ENCODE measurements at regions of chr15 and their contacts with region 1.

Region 1: DNA sequence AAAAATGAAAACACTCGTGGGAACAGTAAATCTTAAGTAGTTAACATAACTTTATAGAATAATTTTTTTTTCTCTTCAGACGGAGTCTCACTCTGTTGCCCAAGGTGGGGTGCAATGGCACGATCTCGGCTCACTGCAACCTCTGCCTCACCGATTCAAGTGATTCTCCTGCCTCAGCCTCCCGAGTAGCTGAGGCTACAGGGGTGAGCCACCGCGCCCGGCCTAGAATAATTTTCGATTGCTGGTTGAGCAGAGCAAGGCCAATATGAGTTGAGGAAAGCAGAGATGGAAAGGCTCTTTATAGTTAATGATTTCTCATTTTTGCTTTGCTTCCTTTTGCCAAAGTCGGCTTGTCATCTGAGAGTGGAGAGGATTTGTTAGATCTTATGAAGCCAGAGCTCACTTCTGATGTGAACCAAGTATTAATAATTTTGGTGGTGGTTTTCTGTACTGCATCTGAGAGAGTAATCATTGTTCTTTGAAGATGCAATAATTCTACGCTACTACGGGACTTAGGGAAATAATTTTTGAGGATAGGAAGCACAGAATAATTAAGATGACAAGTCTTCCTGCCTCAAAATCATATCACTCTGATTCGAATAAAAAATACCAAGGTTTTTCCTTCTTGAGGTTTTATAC is 1.6 kb upstream of the GOLM2 start:
- DNase-seq: peak in 1 of 3 donors; percentile 2
- H3K4me3 ChIP-seq: peak overlapping the region; percentile 72 to 99 (median 94)
- H3K4me3 Mint-ChIP-seq: peak overlapping the region; percentile 89 to 98
- H3K27ac ChIP-seq: no peak overlapping the region
- H3K27ac Mint-ChIP-seq: peak overlapping the region in 2 of 7 donors; percentile 9 to 99
- H3K4me1 ChIP-seq: peaks cover 18 to 30% of the 10 kb centered on the region in 2 donors
- H3K4me1 Mint-ChIP-seq: peaks cover 34% of the 10 kb centered on the region
- H3K27me3 ChIP-seq: no peaks in the 10 kb centered on the region
- H3K27me3 Mint-ChIP-seq: peaks cover 2 to 12% (median 4%) of the 10 kb centered on the region in 3 donors
- CTCF ChIP-seq: peak; percentile 33

Region 2: GRCh38 chr15:44246521-44247268 is 40.2 kb before region 1 on chr15:
- intact Hi-C with region 1: no loop called
- DNase-seq: no peak
- H3K4me3 ChIP-seq: no peak overlapping the region
- H3K4me3 Mint-ChIP-seq: no peak overlapping the region
- H3K27ac ChIP-seq: no peak overlapping the region
- H3K27ac Mint-ChIP-seq: no peak overlapping the region
- H3K4me1 ChIP-seq: no peaks in the 10 kb centered on the region
- H3K4me1 Mint-ChIP-seq: no peaks in the 10 kb centered on the region
- H3K27me3 ChIP-seq: no peaks in the 10 kb centered on the region
- H3K27me3 Mint-ChIP-seq: peaks cover 3 to 9% (median 8%) of the 10 kb centered on the region in 3 donors
- CTCF ChIP-seq: no peak

Region 3: GRCh38 chr15:44265757-44266156 is 21.2 kb before region 1 on chr15:
- intact Hi-C with region 1: no loop called
- DNase-seq: no peak
- H3K4me3 ChIP-seq: no peak overlapping the region
- H3K4me3 Mint-ChIP-seq: no peak overlapping the region
- H3K27ac ChIP-seq: no peak overlapping the region
- H3K27ac Mint-ChIP-seq: no peak overlapping the region
- H3K4me1 ChIP-seq: no peaks in the 10 kb centered on the region
- H3K4me1 Mint-ChIP-seq: no peaks in the 10 kb centered on the region
- H3K27me3 ChIP-seq: no peaks in the 10 kb centered on the region
- H3K27me3 Mint-ChIP-seq: peaks cover 0 to 5% (median 2%) of the 10 kb centered on the region in 3 donors
- CTCF ChIP-seq: no peak

Region 4: DNA sequence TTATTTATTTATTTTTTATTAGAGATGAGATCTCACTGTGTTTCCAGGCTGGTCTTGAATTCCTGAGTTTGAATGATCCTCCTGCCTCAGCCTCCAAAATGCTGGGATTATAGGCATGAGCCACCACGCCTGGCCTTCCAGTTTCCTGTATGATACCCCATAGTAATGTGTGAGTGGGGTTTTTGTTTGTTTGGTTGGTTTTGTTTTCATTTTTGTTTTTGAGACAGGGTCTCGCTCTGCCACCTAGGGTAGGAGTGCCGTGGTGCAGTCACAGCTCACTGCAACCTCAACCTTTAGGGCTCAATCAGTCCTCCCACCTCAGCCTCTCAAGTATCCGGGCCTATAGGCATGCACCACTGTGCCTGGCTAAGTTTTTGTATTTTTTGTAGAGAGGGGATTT is 32.5 kb after region 1 on chr15:
- intact Hi-C with region 1: no loop called
- DNase-seq: no peak
- H3K4me3 ChIP-seq: no peak overlapping the region
- H3K4me3 Mint-ChIP-seq: no peak overlapping the region
- H3K27ac ChIP-seq: no peak overlapping the region
- H3K27ac Mint-ChIP-seq: peak overlapping the region in 2 of 7 donors; percentile 0 to 18
- H3K4me1 ChIP-seq: no peaks in the 10 kb centered on the region
- H3K4me1 Mint-ChIP-seq: peaks cover 14% of the 10 kb centered on the region
- H3K27me3 ChIP-seq: no peaks in the 10 kb centered on the region
- H3K27me3 Mint-ChIP-seq: peaks cover 0 to 4% (median 0%) of the 10 kb centered on the region in 3 donors
- CTCF ChIP-seq: no peak

Region 5: GRCh38 chr15:44381236-44381635 is 94.3 kb after region 1 on chr15:
- intact Hi-C with region 1: loop called in 1 of 2 experiments (anchors 10 kb)
- DNase-seq: peak in 2 of 3 donors; percentile 8 to 20
- H3K4me3 ChIP-seq: no peak overlapping the region
- H3K4me3 Mint-ChIP-seq: no peak overlapping the region
- H3K27ac ChIP-seq: no peak overlapping the region
- H3K27ac Mint-ChIP-seq: no peak overlapping the region
- H3K4me1 ChIP-seq: peaks cover 11 to 15% of the 10 kb centered on the region in 2 donors
- H3K4me1 Mint-ChIP-seq: peaks cover 20% of the 10 kb centered on the region
- H3K27me3 ChIP-seq: no peaks in the 10 kb centered on the region
- H3K27me3 Mint-ChIP-seq: peaks cover 0 to 1% (median 1%) of the 10 kb centered on the region in 3 donors
- CTCF ChIP-seq: no peak

Region 6: DNA sequence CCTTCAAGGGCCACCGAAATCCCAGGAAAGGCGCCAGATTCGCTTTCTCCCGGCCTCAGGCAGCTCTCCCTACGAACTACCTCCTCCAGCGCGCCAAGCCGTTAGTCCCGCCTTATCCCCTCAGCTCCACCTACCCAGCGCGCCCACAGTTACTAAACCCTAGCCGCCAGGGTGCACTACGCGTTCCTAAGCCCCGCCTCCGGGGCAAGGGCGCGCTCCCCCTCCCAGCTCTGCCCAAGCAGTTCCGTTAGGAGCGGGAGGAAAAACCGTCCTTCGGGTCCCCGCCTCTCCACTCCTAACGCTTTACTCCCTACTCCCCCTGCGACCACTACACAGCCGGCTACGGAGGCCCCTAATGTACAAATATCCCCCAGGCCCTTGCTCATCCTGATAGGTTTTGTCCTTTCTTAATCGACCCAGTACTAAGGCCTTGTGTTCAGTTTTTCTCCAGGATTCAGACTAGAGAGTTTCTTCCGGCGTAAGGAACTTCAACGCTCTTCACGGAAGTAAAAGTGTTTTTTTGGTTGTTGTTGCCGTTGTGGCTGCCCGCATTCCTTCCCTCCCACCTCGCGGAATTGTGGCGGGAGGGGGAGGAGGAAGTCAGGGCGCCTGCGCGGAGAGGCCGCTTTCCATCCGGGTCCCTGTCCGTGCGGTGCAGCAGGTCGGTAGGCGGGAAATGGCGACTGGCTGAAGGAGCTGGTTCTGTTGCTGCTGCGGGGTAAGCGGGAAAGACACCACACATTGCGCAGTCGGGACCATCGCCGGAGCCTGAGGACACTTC is 140.2 kb after region 1 on chr15 and contains the start of gene CTDSPL2:
- intact Hi-C with region 1: loop called in 1 of 2 experiments (anchors 5 kb)
- DNase-seq: peak; percentile 90 to 93 (median 91)
- H3K4me3 ChIP-seq: peak within 1 kb of the TSS; percentile 83 to 100 (median 96)
- H3K4me3 Mint-ChIP-seq: peak within 1 kb of the TSS; percentile 96 to 98
- H3K27ac ChIP-seq: peak within 1 kb of the TSS; percentile 92 to 99
- H3K27ac Mint-ChIP-seq: peak within 1 kb of the TSS; percentile 98 to 100 (median 99)
- H3K4me1 ChIP-seq: peaks cover 26 to 41% of the 10 kb centered on the region in 2 donors
- H3K4me1 Mint-ChIP-seq: peaks cover 36% of the 10 kb centered on the region
- H3K27me3 ChIP-seq: no peaks in the 10 kb centered on the region
- H3K27me3 Mint-ChIP-seq: peaks cover 0 to 3% (median 2%) of the 10 kb centered on the region in 3 donors
- CTCF ChIP-seq: no peak
- polyA plus RNA-seq, gene CTDSPL2: 18.1 to 31.4 (median 24.5) TPM

Region 7: GRCh38 chr15:44536962-44537734 is 250.2 kb after region 1 on chr15 and contains the start of gene EIF3J:
- intact Hi-C with region 1: loop called in 1 of 2 experiments (anchors 10 kb)
- DNase-seq: peak; percentile 97 to 98 (median 97)
- H3K4me3 ChIP-seq: peak within 1 kb of the TSS; percentile 86 to 95 (median 90)
- H3K4me3 Mint-ChIP-seq: peak within 1 kb of the TSS; percentile 85 to 93
- H3K27ac ChIP-seq: peak within 1 kb of the TSS; percentile 94 to 96
- H3K27ac Mint-ChIP-seq: peak within 1 kb of the TSS; percentile 93 to 98 (median 96)
- H3K4me1 ChIP-seq: peaks cover 12 to 27% of the 10 kb centered on the region in 2 donors
- H3K4me1 Mint-ChIP-seq: peaks cover 32% of the 10 kb centered on the region
- H3K27me3 ChIP-seq: no peaks in the 10 kb centered on the region
- H3K27me3 Mint-ChIP-seq: no peaks in the 10 kb centered on the region
- CTCF ChIP-seq: no peak
- polyA plus RNA-seq, gene EIF3J: 9.7 to 20.1 (median 13.5) TPM

Region 8: GRCh38 chr15:44798826-44799225 is 511.9 kb after region 1 on chr15:
- intact Hi-C with region 1: no loop called
- DNase-seq: no peak
- H3K4me3 ChIP-seq: no peak overlapping the region
- H3K4me3 Mint-ChIP-seq: no peak overlapping the region
- H3K27ac ChIP-seq: no peak overlapping the region
- H3K27ac Mint-ChIP-seq: peak overlapping the region in 1 of 7 donors; percentile 48
- H3K4me1 ChIP-seq: no peaks in the 10 kb centered on the region
- H3K4me1 Mint-ChIP-seq: peaks cover 10% of the 10 kb centered on the region
- H3K27me3 ChIP-seq: no peaks in the 10 kb centered on the region
- H3K27me3 Mint-ChIP-seq: no peaks in the 10 kb centered on the region
- CTCF ChIP-seq: no peak

Measured in CD14-positive monocyte (primary cell).